Endothelial cell of umbilical vein (primary cell): ENCODE measurements at regions of chr1 and their contacts with region 1.

Region 1: DNA sequence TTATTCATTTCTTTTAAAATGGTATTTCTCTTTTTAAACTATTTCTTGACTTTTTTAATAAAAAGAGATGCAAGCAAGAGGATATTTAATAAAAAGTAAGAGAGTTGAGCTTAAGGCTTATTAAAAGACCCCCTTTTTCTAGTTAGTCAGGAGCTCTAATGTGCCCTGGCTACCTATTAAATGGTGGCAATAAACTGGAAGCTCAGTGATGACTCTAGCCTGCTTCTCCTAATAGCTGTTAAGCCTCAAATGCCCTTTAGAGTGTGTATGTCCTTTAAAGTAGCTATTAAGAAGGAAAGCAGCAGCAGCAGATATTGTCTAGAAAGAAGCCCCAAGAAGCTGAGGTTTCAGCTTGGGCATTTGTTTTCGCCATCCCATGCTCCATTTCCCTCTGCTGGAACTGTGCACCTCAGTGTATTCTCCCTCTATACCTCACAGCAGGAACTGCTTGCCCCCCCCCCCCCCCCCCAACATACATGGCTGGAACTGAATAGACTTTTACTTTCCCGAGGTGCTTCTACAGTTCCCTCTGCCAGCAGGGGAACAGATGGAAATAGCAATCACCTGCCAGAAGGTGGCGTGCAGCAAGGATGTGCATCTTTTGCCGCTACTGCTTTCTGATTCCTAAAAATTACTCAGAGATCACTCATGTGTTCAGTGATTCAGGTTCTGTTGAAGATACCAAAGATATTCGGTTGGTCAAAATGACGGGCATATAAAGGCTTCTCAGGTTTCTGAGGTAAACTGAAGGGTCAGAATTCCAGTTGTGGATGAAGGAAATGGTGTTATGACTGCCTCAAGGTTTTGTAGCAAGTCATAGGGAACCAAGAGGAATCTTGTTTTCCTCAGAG is 2.5 kb downstream of the RGS4 start:
- DNase-seq: peak; percentile 88
- H3K4me3 ChIP-seq: peak overlapping the region in 2 of 3 experiments; percentile 30 to 98
- H3K27ac ChIP-seq: peak overlapping the region; percentile 69
- H3K4me1 ChIP-seq: peaks cover 44% of the 10 kb centered on the region
- H3K27me3 ChIP-seq: no peaks in the 10 kb centered on the region
- CTCF ChIP-seq: peak; percentile 68 to 79
- POLR2A ChIP-seq: no peak

Region 2: DNA sequence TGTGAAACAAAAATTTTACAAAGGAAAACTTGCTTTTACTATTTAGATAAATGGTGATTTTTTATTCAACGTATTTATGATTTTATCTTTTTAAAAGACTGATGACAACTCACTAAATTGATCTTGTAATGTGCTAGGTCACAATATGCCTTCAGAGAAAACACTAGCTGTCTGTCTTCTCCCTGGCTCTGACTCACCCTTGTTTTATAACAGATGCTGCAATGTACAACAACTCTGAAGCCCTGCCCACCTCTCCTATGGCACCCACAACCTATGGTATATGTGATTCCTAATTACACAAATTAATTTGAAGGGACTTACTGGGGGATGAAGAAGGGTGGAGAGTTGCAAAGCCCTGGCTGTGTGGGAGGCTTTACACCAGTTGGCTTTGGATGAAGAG is 305.8 kb before region 1 on chr1:
- CTCF ChIA-PET with region 1: no interaction called
- POLR2A ChIA-PET with region 1: no interaction called
- dilution Hi-C with region 1: no loop called
- intact Hi-C with region 1: no loop called
- DNase-seq: no peak
- H3K4me3 ChIP-seq: no peak overlapping the region
- H3K27ac ChIP-seq: no peak overlapping the region
- H3K4me1 ChIP-seq: no peaks in the 10 kb centered on the region
- H3K27me3 ChIP-seq: no peaks in the 10 kb centered on the region
- CTCF ChIP-seq: no peak
- POLR2A ChIP-seq: no peak

Region 3: GRCh38 chr1:162854245-162854882 is 217.3 kb before region 1 on chr1:
- CTCF ChIA-PET with region 1: interaction called, 57 read pairs
- POLR2A ChIA-PET with region 1: interaction called, 7 read pairs
- dilution Hi-C with region 1: loop called (anchors 25 kb)
- intact Hi-C with region 1: loop called (anchors 1 kb)
- DNase-seq: peak; percentile 82
- H3K4me3 ChIP-seq: peak overlapping the region in 1 of 3 experiments; percentile 4
- H3K27ac ChIP-seq: peak overlapping the region; percentile 93
- H3K4me1 ChIP-seq: peaks cover 57% of the 10 kb centered on the region
- H3K27me3 ChIP-seq: no peaks in the 10 kb centered on the region
- CTCF ChIP-seq: peak; percentile 63 to 68
- POLR2A ChIP-seq: peak; percentile 7

Region 4: GRCh38 chr1:162905174-162906158 is 166.2 kb before region 1 on chr1:
- CTCF ChIA-PET with region 1: interaction called, 10 read pairs
- POLR2A ChIA-PET with region 1: interaction called, 5 read pairs
- dilution Hi-C with region 1: no loop called
- intact Hi-C with region 1: no loop called
- DNase-seq: peak; percentile 53
- H3K4me3 ChIP-seq: no peak overlapping the region
- H3K27ac ChIP-seq: no peak overlapping the region
- H3K4me1 ChIP-seq: peaks cover 19% of the 10 kb centered on the region
- H3K27me3 ChIP-seq: no peaks in the 10 kb centered on the region
- CTCF ChIP-seq: no peak
- POLR2A ChIP-seq: no peak

Region 5: DNA sequence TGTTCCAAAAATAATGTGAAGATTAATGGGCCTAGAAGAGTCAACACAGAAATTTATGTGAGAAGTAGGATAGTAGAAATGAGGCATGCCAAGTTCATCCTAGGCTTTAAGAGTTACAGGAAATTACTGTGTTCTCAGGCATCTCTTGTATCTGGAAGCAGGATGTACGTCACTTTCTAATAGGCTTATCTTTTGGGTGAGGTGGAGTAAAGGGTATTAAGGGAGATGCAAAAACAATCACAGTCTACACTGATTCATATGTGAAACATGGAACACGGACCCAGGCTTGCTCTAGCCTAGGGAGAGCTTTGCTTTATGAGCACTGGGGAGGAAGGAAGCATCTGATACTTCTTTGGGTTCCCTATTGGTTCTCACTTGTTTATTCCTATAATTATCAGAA is 86.9 kb before region 1 on chr1:
- CTCF ChIA-PET with region 1: interaction called, 7 read pairs
- POLR2A ChIA-PET with region 1: interaction called, 6 read pairs
- dilution Hi-C with region 1: no loop called
- intact Hi-C with region 1: loop called (anchors 1 kb)
- DNase-seq: peak; percentile 88
- H3K4me3 ChIP-seq: no peak overlapping the region
- H3K27ac ChIP-seq: peak overlapping the region; percentile 75
- H3K4me1 ChIP-seq: peaks cover 27% of the 10 kb centered on the region
- H3K27me3 ChIP-seq: no peaks in the 10 kb centered on the region
- CTCF ChIP-seq: no peak
- POLR2A ChIP-seq: peak; percentile 28

Region 6: GRCh38 chr1:163046071-163046470 is 25.6 kb before region 1 on chr1:
- CTCF ChIA-PET with region 1: no interaction called
- POLR2A ChIA-PET with region 1: no interaction called
- dilution Hi-C with region 1: no loop called
- intact Hi-C with region 1: no loop called
- DNase-seq: no peak
- H3K4me3 ChIP-seq: no peak overlapping the region
- H3K27ac ChIP-seq: no peak overlapping the region
- H3K4me1 ChIP-seq: no peaks in the 10 kb centered on the region
- H3K27me3 ChIP-seq: no peaks in the 10 kb centered on the region
- CTCF ChIP-seq: no peak
- POLR2A ChIP-seq: no peak

Region 7: DNA sequence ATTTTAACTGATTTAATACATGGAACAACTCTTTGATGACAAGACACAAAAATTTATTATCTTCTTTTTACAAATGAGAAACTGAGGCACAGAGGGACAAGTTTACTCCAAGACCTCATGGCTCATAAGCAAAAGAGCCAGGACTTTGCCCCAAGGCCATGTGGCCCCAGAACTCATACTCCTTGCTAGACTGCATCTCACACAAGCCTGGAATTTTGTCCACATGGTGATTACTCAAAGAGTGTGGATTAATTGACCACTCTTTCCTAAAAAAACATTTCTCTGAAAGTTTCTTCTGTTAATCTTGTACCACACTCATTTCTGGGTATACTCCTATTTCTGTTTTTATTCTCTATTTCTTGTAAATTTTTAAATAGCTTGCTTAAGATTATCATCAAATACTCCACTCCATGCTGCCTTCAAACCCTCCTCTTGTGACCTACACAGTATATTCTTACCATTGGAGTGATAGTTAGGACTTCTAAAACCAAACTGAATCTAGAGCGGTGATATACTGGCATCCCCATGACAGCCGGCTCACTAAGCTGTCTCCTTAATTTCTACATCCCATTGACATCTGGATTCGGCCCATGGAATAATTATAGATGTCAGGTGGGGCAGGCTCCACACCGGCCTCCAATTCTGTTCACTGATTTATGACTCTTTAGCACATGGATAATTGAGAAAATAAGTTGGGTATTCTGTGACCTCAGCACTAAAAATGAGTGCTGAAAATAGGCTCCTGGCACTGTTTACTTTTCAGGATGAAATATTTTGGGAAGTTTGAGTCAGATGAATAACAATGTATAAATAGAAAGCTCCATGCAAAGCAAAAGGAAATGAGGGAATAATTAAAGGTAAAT is 13.6 kb after region 1 on chr1:
- CTCF ChIA-PET with region 1: interaction called, 8 read pairs
- POLR2A ChIA-PET with region 1: interaction called, 3 read pairs
- dilution Hi-C with region 1: no loop called
- intact Hi-C with region 1: loop called (anchors 1 kb)
- DNase-seq: peak; percentile 83
- H3K4me3 ChIP-seq: no peak overlapping the region
- H3K27ac ChIP-seq: peak overlapping the region; percentile 60
- H3K4me1 ChIP-seq: peaks cover 37% of the 10 kb centered on the region
- H3K27me3 ChIP-seq: no peaks in the 10 kb centered on the region
- CTCF ChIP-seq: no peak
- POLR2A ChIP-seq: no peak

Region 8: GRCh38 chr1:163104385-163105099 is 32.9 kb after region 1 on chr1:
- CTCF ChIA-PET with region 1: no interaction called
- POLR2A ChIA-PET with region 1: no interaction called
- dilution Hi-C with region 1: no loop called
- intact Hi-C with region 1: no loop called
- DNase-seq: no peak
- H3K4me3 ChIP-seq: no peak overlapping the region
- H3K27ac ChIP-seq: no peak overlapping the region
- H3K4me1 ChIP-seq: no peaks in the 10 kb centered on the region
- H3K27me3 ChIP-seq: no peaks in the 10 kb centered on the region
- CTCF ChIP-seq: no peak
- POLR2A ChIP-seq: no peak

Region 9: DNA sequence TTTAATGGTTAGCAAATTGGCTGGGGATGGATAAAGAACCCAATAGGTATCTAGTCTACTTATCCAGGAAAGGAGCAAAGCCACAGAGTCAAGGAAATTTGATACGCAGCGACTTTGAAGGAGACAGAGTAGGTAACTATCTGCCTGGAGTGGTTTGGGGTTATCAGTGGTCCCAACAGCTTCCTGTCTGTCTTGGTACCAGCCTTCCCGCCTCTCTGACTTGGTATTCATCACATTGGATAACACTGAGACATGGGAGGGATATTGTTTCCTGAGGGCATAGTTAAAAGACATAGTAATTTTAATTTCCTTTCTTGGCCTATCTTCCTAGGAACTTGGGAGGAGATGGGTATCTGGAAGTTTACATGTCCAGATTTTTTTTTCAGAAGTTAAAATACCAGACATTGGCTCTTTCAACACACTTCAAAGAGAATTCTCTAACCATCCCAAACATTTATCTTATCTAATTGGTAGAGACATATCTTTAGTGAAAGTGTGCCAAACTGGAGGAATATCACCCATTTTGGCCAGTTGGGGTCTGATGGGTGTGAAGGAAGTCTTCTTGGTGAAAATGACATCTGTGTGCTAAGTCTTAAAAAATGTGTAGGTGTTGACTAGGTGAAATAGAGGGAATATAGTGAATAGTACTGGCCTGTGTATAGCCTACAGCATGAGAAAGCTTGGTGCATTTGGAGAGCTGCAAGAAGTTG is 66.1 kb after region 1 on chr1:
- CTCF ChIA-PET with region 1: no interaction called
- POLR2A ChIA-PET with region 1: no interaction called
- dilution Hi-C with region 1: no loop called
- intact Hi-C with region 1: no loop called
- DNase-seq: no peak
- H3K4me3 ChIP-seq: no peak overlapping the region
- H3K27ac ChIP-seq: no peak overlapping the region
- H3K4me1 ChIP-seq: no peaks in the 10 kb centered on the region
- H3K27me3 ChIP-seq: no peaks in the 10 kb centered on the region
- CTCF ChIP-seq: no peak
- POLR2A ChIP-seq: no peak

Region 10: GRCh38 chr1:163174524-163175437 is 103.2 kb after region 1 on chr1:
- CTCF ChIA-PET with region 1: interaction called, 128 read pairs
- POLR2A ChIA-PET with region 1: no interaction called
- dilution Hi-C with region 1: no loop called
- intact Hi-C with region 1: loop called (anchors 1 kb)
- DNase-seq: peak; percentile 77
- H3K4me3 ChIP-seq: no peak overlapping the region
- H3K27ac ChIP-seq: no peak overlapping the region
- H3K4me1 ChIP-seq: peaks cover 54% of the 10 kb centered on the region
- H3K27me3 ChIP-seq: no peaks in the 10 kb centered on the region
- CTCF ChIP-seq: peak; percentile 77 to 90
- POLR2A ChIP-seq: no peak